ENCODE measurements at regions of chr1 and their contacts with region 1.

Region 1: DNA sequence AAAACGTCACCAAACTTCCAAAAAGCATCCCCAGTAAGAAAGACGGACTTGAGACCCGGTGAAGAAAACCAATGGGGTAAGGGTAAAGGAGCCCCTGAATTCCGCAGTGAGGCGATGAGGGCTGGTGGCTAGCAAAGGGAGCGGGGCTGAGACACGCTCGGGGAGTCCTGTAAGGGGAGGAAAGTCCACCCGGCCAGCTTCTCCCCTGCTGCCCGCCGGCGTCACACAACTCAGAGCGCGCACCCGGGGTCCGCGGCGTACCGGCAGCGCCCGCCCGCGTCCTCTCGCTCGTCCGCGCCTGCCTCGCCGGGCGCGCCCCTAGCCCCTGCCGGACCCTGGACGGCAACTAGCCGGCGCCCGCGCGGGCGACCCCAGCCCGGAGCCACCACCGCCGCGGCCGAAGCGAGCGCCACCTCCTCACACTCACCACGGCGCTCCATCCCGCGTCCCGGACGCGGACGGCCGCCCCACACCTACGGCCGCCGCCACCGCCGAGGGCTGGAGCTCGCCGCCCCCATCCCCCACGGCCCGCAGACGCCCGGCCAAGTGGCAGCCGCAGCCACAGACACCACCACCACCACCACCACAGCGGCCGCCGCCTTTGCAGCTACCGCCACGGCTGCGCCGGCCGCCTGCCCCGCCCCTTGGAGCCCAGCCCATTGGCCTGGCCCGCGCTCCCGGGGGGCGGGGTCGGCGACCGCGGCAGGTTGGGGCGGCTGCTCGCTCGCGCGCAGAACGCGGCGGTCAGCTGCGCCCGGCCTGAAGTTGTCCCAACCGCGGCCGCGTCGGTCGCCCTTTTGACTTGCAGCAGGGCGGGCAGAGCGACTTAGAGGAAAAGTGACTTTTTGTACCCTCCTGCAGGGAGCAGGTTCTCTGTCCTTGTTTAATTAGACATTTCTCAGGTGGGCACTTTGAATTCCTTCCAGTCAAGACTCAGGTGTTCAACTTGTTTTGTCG is 10.0 kb upstream of the ARHGAP29 start:
- DNase-seq: peak; percentile 83 to 91
- ATAC-seq: peak; percentile 96 to 98 (median 98)
- H3K4me3 ChIP-seq: peak overlapping the region; percentile 73
- H3K27ac ChIP-seq: peak overlapping the region; percentile 78
- H3K4me1 ChIP-seq: peaks cover 5% of the 10 kb centered on the region
- H3K27me3 ChIP-seq: no peaks in the 10 kb centered on the region
- CTCF ChIP-seq: no peak

Region 2: GRCh38 chr1:94329986-94330385 is 82.6 kb after region 1 on chr1:
- intact Hi-C with region 1: loop called in 1 of 2 experiments (anchors 2 kb)
- DNase-seq: no peak
- ATAC-seq: no peak
- H3K4me3 ChIP-seq: no peak overlapping the region
- H3K27ac ChIP-seq: no peak overlapping the region
- H3K4me1 ChIP-seq: peaks cover 42% of the 10 kb centered on the region
- H3K27me3 ChIP-seq: no peaks in the 10 kb centered on the region
- CTCF ChIP-seq: no peak

Region 3: GRCh38 chr1:94417978-94418663 is 170.7 kb after region 1 on chr1 and contains the start of gene ABCD3:
- intact Hi-C with region 1: loop called in 1 of 2 experiments (anchors 10 kb)
- DNase-seq: peak; percentile 98 to 99
- ATAC-seq: peak; percentile 97 to 99 (median 98)
- H3K4me3 ChIP-seq: peak within 1 kb of the TSS; percentile 97
- H3K27ac ChIP-seq: peak within 1 kb of the TSS; percentile 84
- H3K4me1 ChIP-seq: peaks cover 32% of the 10 kb centered on the region
- H3K27me3 ChIP-seq: no peaks in the 10 kb centered on the region
- CTCF ChIP-seq: no peak
- total RNA-seq, gene ABCD3: 34.4 to 48.5 (median 40.1) TPM

Measured in psoas muscle (tissue), 8 donors.